B cell (primary cell): ENCODE measurements at regions of chr2 and their contacts with region 1.

Region 1: GRCh38 chr2:74833418-74834233 is at the start of gene HK2:
- DNase-seq: peak; percentile 89
- ATAC-seq: peak; percentile 88
- H3K4me3 ChIP-seq: peak within 1 kb of the TSS; percentile 74 to 94 (median 80)
- H3K4me3 Mint-ChIP-seq: peak within 1 kb of the TSS; percentile 93
- H3K27ac ChIP-seq: peak within 1 kb of the TSS; percentile 69 to 75
- H3K27ac Mint-ChIP-seq: peak within 1 kb of the TSS; percentile 95
- H3K4me1 ChIP-seq: peaks cover 10 to 26% of the 10 kb centered on the region in 2 donors
- H3K4me1 Mint-ChIP-seq: peaks cover 30% of the 10 kb centered on the region
- H3K27me3 ChIP-seq: no peaks in the 10 kb centered on the region
- H3K27me3 Mint-ChIP-seq: no peaks in the 10 kb centered on the region
- CTCF ChIP-seq: no peak
- total RNA-seq, gene HK2: 5.0 and 5.7 TPM in 2 replicates

Region 2: GRCh38 chr2:73385595-73386341 is 1447.9 kb before region 1 on chr2 and contains the start of gene ALMS1:
- CTCF ChIA-PET with region 1: no interaction called
- POLR2A ChIA-PET with region 1: no interaction called
- intact Hi-C with region 1: loop called (anchors 10 kb)
- DNase-seq: peak; percentile 93
- ATAC-seq: peak; percentile 80
- H3K4me3 ChIP-seq: peak within 1 kb of the TSS; percentile 56 to 87 (median 82)
- H3K4me3 Mint-ChIP-seq: peak within 1 kb of the TSS; percentile 90
- H3K27ac ChIP-seq: peak within 1 kb of the TSS; percentile 80 to 82
- H3K27ac Mint-ChIP-seq: peak within 1 kb of the TSS; percentile 93
- H3K4me1 ChIP-seq: peaks cover 18 to 20% of the 10 kb centered on the region in 2 donors
- H3K4me1 Mint-ChIP-seq: peaks cover 23% of the 10 kb centered on the region
- H3K27me3 ChIP-seq: peaks cover 0 to 8% (median 4%) of the 10 kb centered on the region in 4 experiments
- H3K27me3 Mint-ChIP-seq: peaks cover 17% of the 10 kb centered on the region
- CTCF ChIP-seq: no peak
- total RNA-seq, gene ALMS1: 32.1 and 33.1 TPM in 2 replicates

Region 3: DNA sequence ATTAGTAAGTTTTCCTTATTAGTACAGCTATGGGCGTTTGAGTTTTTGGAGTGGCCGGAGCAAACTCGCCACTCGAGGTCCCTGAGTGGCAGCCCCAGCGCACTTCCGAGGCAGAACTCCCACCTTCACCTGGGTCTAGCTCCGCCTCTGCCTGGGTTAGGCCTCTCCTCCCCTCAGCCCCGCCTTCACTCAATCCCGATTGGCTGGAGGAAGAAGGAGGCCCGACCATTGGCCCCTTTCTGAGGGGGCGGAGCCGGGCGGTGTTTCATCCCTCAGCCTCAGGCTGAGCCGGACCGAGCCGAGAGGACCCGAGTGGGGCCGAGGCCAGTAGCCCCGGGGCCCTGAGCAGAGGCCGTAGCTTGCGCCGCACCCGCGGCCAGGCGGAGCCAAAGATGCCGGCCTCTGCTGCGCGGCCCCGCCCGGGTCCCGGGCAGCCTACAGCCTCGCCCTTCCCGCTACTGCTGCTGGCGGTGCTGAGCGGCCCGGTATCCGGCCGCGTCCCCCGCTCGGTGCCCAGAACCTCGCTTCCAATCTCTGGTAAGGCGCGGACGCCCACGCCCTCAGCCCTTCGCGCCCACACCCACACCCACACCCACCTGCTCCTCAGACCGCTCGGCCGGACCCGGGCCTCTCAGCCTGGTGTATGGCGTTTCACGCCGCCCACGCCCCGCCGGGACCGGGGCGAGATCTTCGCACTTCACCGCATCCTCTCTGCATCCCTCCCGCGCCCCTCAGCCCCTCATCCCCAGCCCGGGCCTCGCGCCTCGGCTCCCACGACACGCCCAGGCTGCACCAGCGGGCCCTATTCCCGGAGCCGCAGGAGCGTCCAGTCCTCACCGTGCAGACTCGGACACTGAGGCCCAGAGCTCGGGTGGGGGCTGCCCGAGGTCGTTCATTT is 179.4 kb before region 1 on chr2 and contains the start of gene SEMA4F:
- CTCF ChIA-PET with region 1: no interaction called
- POLR2A ChIA-PET with region 1: no interaction called
- intact Hi-C with region 1: loop called (anchors 1 kb)
- DNase-seq: peak; percentile 94
- ATAC-seq: peak; percentile 99
- H3K4me3 ChIP-seq: peak within 1 kb of the TSS; percentile 56 to 90 (median 80)
- H3K4me3 Mint-ChIP-seq: peak within 1 kb of the TSS; percentile 95
- H3K27ac ChIP-seq: peak within 1 kb of the TSS in 1 of 2 donors; percentile 53
- H3K27ac Mint-ChIP-seq: peak within 1 kb of the TSS; percentile 85
- H3K4me1 ChIP-seq: peaks cover 8 to 13% of the 10 kb centered on the region in 2 donors
- H3K4me1 Mint-ChIP-seq: peaks cover 18% of the 10 kb centered on the region
- H3K27me3 ChIP-seq: peaks cover 0 to 7% (median 3%) of the 10 kb centered on the region in 4 experiments
- H3K27me3 Mint-ChIP-seq: peaks cover 5% of the 10 kb centered on the region
- CTCF ChIP-seq: no peak
- total RNA-seq, gene SEMA4F: 18.9 and 19.3 TPM in 2 replicates

Region 4: GRCh38 chr2:74740389-74741075 is 93.1 kb before region 1 on chr2:
- CTCF ChIA-PET with region 1: no interaction called
- POLR2A ChIA-PET with region 1: no interaction called
- intact Hi-C with region 1: no loop called
- DNase-seq: no peak
- ATAC-seq: no peak
- H3K4me3 ChIP-seq: no peak overlapping the region
- H3K4me3 Mint-ChIP-seq: no peak overlapping the region
- H3K27ac ChIP-seq: no peak overlapping the region
- H3K27ac Mint-ChIP-seq: no peak overlapping the region
- H3K4me1 ChIP-seq: no peaks in the 10 kb centered on the region
- H3K4me1 Mint-ChIP-seq: no peaks in the 10 kb centered on the region
- H3K27me3 ChIP-seq: peaks cover 0 to 5% (median 0%) of the 10 kb centered on the region in 4 experiments
- H3K27me3 Mint-ChIP-seq: peaks cover 18% of the 10 kb centered on the region
- CTCF ChIP-seq: no peak

Region 5: GRCh38 chr2:74843898-74844297 is 10.3 kb after region 1 on chr2:
- CTCF ChIA-PET with region 1: interaction called, 31 read pairs
- POLR2A ChIA-PET with region 1: interaction called, 6 read pairs
- intact Hi-C with region 1: loop called (anchors 1 kb)
- DNase-seq: peak; percentile 69
- ATAC-seq: peak; percentile 91
- H3K4me3 ChIP-seq: peak overlapping the region in 1 of 5 experiments; percentile 23
- H3K4me3 Mint-ChIP-seq: peak overlapping the region; percentile 21
- H3K27ac ChIP-seq: peak overlapping the region; percentile 28 to 53
- H3K27ac Mint-ChIP-seq: peak overlapping the region; percentile 64
- H3K4me1 ChIP-seq: peaks cover 34 to 50% of the 10 kb centered on the region in 2 donors
- H3K4me1 Mint-ChIP-seq: peaks cover 56% of the 10 kb centered on the region
- H3K27me3 ChIP-seq: no peaks in the 10 kb centered on the region
- H3K27me3 Mint-ChIP-seq: no peaks in the 10 kb centered on the region
- CTCF ChIP-seq: no peak

Region 6: GRCh38 chr2:74876081-74876886 is 42.7 kb after region 1 on chr2:
- CTCF ChIA-PET with region 1: interaction called, 75 read pairs
- POLR2A ChIA-PET with region 1: interaction called, 5 read pairs
- intact Hi-C with region 1: loop called (anchors 1 kb)
- DNase-seq: peak; percentile 80
- ATAC-seq: peak; percentile 80
- H3K4me3 ChIP-seq: no peak overlapping the region
- H3K4me3 Mint-ChIP-seq: no peak overlapping the region
- H3K27ac ChIP-seq: no peak overlapping the region
- H3K27ac Mint-ChIP-seq: no peak overlapping the region
- H3K4me1 ChIP-seq: peaks cover 0 to 3% of the 10 kb centered on the region in 2 donors
- H3K4me1 Mint-ChIP-seq: no peaks in the 10 kb centered on the region
- H3K27me3 ChIP-seq: no peaks in the 10 kb centered on the region
- H3K27me3 Mint-ChIP-seq: no peaks in the 10 kb centered on the region
- CTCF ChIP-seq: peak; percentile 77

Region 7: DNA sequence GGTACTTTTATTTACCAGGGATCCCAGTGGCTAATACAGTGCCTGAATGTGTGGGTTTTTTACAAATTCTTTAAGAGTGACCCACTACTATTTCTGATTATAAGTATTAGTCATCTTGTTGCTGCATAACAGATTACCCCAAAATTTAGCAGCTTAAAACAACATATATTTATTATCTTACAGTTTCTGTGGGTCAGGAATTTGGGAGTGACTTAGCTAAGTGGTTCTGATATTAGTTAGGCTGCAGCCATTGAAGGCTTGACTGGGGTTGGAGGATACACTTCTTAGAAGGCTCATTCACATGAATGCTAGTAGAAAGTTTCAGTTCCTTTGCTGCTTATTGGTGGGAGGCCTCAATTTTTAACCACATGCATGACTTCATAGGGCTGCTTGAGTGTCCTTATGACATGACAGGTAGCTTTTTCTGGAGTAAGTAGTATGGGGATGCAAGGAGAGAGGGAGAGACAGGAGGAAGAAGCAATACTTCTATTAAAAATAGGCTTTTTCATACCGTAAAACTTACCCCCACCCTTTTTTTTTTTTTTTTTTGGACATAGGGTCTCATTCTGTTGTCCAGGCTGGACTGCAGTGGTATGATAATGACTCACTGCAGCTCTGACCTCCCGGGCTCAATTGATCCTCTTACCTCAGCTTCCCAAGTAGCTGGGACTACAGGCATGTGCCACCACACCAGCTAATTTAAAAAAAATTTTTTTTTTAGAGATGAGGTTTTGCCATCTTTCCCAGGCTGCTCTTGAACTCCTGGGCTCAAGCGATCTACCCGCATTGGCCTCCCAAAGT is 111.6 kb after region 1 on chr2:
- CTCF ChIA-PET with region 1: no interaction called
- POLR2A ChIA-PET with region 1: no interaction called
- intact Hi-C with region 1: no loop called
- DNase-seq: peak; percentile 32
- ATAC-seq: peak; percentile 90
- H3K4me3 ChIP-seq: no peak overlapping the region
- H3K4me3 Mint-ChIP-seq: no peak overlapping the region
- H3K27ac ChIP-seq: no peak overlapping the region
- H3K27ac Mint-ChIP-seq: no peak overlapping the region
- H3K4me1 ChIP-seq: peaks cover 4 to 5% of the 10 kb centered on the region in 2 donors
- H3K4me1 Mint-ChIP-seq: peaks cover 38% of the 10 kb centered on the region
- H3K27me3 ChIP-seq: no peaks in the 10 kb centered on the region
- H3K27me3 Mint-ChIP-seq: no peaks in the 10 kb centered on the region
- CTCF ChIP-seq: no peak

Region 8: GRCh38 chr2:75113231-75113869 is 279.7 kb after region 1 on chr2:
- CTCF ChIA-PET with region 1: no interaction called
- POLR2A ChIA-PET with region 1: no interaction called
- intact Hi-C with region 1: no loop called
- DNase-seq: no peak
- ATAC-seq: no peak
- H3K4me3 ChIP-seq: no peak overlapping the region
- H3K4me3 Mint-ChIP-seq: no peak overlapping the region
- H3K27ac ChIP-seq: no peak overlapping the region
- H3K27ac Mint-ChIP-seq: no peak overlapping the region
- H3K4me1 ChIP-seq: no peaks in the 10 kb centered on the region
- H3K4me1 Mint-ChIP-seq: no peaks in the 10 kb centered on the region
- H3K27me3 ChIP-seq: no peaks in the 10 kb centered on the region
- H3K27me3 Mint-ChIP-seq: no peaks in the 10 kb centered on the region
- CTCF ChIP-seq: no peak